B cell (primary cell): ENCODE measurements at regions of chr6 and their contacts with region 1.

Region 1: GRCh38 chr6:13814176-13814937 is at the start of gene MCUR1:
- DNase-seq: peak; percentile 94
- ATAC-seq: peak; percentile 82
- H3K4me3 ChIP-seq: peak within 1 kb of the TSS; percentile 63 to 88 (median 77)
- H3K4me3 Mint-ChIP-seq: peak within 1 kb of the TSS; percentile 94
- H3K27ac ChIP-seq: peak within 1 kb of the TSS; percentile 68 to 89
- H3K27ac Mint-ChIP-seq: peak within 1 kb of the TSS; percentile 89
- H3K4me1 ChIP-seq: peaks cover 17 to 20% of the 10 kb centered on the region in 2 donors
- H3K4me1 Mint-ChIP-seq: peaks cover 31% of the 10 kb centered on the region
- H3K27me3 ChIP-seq: no peaks in the 10 kb centered on the region
- H3K27me3 Mint-ChIP-seq: no peaks in the 10 kb centered on the region
- CTCF ChIP-seq: peak; percentile 14
- total RNA-seq, gene MCUR1: 10.6 and 11.2 TPM in 2 replicates

Region 2: GRCh38 chr6:13614926-13615798 is 199.2 kb before region 1 on chr6 and contains the start of gene NOL7:
- CTCF ChIA-PET with region 1: no interaction called
- POLR2A ChIA-PET with region 1: interaction called, 3 read pairs
- intact Hi-C with region 1: loop called (anchors 1 kb)
- DNase-seq: peak; percentile 99
- ATAC-seq: peak; percentile 93
- H3K4me3 ChIP-seq: peak within 1 kb of the TSS; percentile 79 to 94 (median 93)
- H3K4me3 Mint-ChIP-seq: peak within 1 kb of the TSS; percentile 97
- H3K27ac ChIP-seq: peak within 1 kb of the TSS; percentile 73 to 82
- H3K27ac Mint-ChIP-seq: peak within 1 kb of the TSS; percentile 97
- H3K4me1 ChIP-seq: peaks cover 16 to 22% of the 10 kb centered on the region in 2 donors
- H3K4me1 Mint-ChIP-seq: peaks cover 46% of the 10 kb centered on the region
- H3K27me3 ChIP-seq: no peaks in the 10 kb centered on the region
- H3K27me3 Mint-ChIP-seq: no peaks in the 10 kb centered on the region
- CTCF ChIP-seq: peak; percentile 86
- total RNA-seq, gene NOL7: 48.6 and 58.3 TPM in 2 replicates

Region 3: GRCh38 chr6:13711733-13712598 is 102.4 kb before region 1 on chr6 and contains the start of gene RANBP9:
- CTCF ChIA-PET with region 1: interaction called, 4 read pairs
- POLR2A ChIA-PET with region 1: interaction called, 3 read pairs
- intact Hi-C with region 1: loop called (anchors 1 kb)
- DNase-seq: peak; percentile 94
- ATAC-seq: peak; percentile 82
- H3K4me3 ChIP-seq: peak within 1 kb of the TSS; percentile 58 to 88 (median 78)
- H3K4me3 Mint-ChIP-seq: peak within 1 kb of the TSS; percentile 96
- H3K27ac ChIP-seq: peak within 1 kb of the TSS; percentile 80 to 84
- H3K27ac Mint-ChIP-seq: peak within 1 kb of the TSS; percentile 96
- H3K4me1 ChIP-seq: peaks cover 29 to 33% of the 10 kb centered on the region in 2 donors
- H3K4me1 Mint-ChIP-seq: peaks cover 41% of the 10 kb centered on the region
- H3K27me3 ChIP-seq: no peaks in the 10 kb centered on the region
- H3K27me3 Mint-ChIP-seq: no peaks in the 10 kb centered on the region
- CTCF ChIP-seq: no peak
- total RNA-seq, gene RANBP9: 34.1 and 39.0 TPM in 2 replicates

Region 4: DNA sequence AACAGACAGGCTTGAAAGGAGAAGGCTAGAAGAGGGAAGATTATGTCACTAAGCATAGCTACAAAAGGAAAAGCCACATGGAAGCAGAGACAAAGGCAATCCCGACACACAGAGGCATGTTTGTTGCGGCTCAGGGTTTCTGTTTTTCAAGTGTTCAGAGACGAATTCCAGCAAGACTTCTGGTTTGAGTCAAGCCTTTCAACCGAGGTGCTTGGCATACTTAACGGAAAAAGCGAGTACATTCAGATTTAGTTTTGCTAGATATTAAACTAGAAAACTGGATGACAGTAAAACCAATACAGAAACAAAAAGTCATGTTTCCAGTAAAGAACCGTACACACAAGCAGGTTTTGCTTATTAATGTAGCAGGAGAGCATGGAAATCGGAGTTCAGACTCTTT is 27.2 kb before region 1 on chr6:
- CTCF ChIA-PET with region 1: interaction called, 4 read pairs
- POLR2A ChIA-PET with region 1: interaction called, 12 read pairs
- intact Hi-C with region 1: no loop called
- DNase-seq: no peak
- ATAC-seq: no peak
- H3K4me3 ChIP-seq: no peak overlapping the region
- H3K4me3 Mint-ChIP-seq: no peak overlapping the region
- H3K27ac ChIP-seq: no peak overlapping the region
- H3K27ac Mint-ChIP-seq: no peak overlapping the region
- H3K4me1 ChIP-seq: no peaks in the 10 kb centered on the region
- H3K4me1 Mint-ChIP-seq: no peaks in the 10 kb centered on the region
- H3K27me3 ChIP-seq: no peaks in the 10 kb centered on the region
- H3K27me3 Mint-ChIP-seq: no peaks in the 10 kb centered on the region
- CTCF ChIP-seq: no peak

Region 5: DNA sequence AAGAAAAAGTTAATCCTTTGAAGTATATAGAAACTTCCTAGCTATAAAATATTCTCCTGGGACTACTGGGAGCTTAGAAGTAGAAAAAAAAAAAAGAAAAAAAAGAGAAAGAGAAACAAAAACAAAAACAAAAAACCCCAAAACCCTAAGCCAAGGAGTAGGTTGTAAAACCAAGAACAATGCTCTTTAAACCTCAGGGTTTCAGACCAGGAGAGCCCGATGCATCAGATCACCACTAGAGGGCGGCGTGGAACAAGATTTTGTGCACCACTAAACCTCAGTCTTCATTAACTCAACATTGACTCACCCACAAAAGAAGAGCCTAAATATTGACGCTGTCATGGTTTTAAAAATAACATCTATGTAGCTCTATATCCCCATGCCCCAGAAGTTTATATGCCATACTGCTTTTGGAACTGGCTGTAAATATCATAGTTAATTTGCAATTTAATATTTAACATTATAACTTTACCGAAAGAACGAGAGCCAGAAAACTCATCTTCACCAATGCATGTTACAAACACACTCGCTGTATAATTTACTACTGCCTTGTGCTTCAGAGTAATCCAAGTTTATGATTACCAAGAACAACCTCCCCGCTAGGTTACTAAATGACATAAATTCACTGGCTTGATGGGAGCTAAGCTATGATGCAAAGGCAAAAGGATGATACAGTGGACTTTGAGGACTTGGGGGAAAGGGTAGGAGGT is 19.2 kb before region 1 on chr6:
- CTCF ChIA-PET with region 1: interaction called, 28 read pairs
- POLR2A ChIA-PET with region 1: no interaction called
- intact Hi-C with region 1: loop called (anchors 1 kb)
- DNase-seq: peak; percentile 81
- ATAC-seq: peak; percentile 91
- H3K4me3 ChIP-seq: no peak overlapping the region
- H3K4me3 Mint-ChIP-seq: no peak overlapping the region
- H3K27ac ChIP-seq: no peak overlapping the region
- H3K27ac Mint-ChIP-seq: no peak overlapping the region
- H3K4me1 ChIP-seq: no peaks in the 10 kb centered on the region
- H3K4me1 Mint-ChIP-seq: peaks cover 2% of the 10 kb centered on the region
- H3K27me3 ChIP-seq: no peaks in the 10 kb centered on the region
- H3K27me3 Mint-ChIP-seq: no peaks in the 10 kb centered on the region
- CTCF ChIP-seq: peak; percentile 93

Region 6: GRCh38 chr6:13873285-13874190 is 59.2 kb after region 1 on chr6:
- CTCF ChIA-PET with region 1: no interaction called
- POLR2A ChIA-PET with region 1: no interaction called
- intact Hi-C with region 1: loop called (anchors 1 kb)
- DNase-seq: peak; percentile 83
- ATAC-seq: peak; percentile 94
- H3K4me3 ChIP-seq: peak overlapping the region; percentile 23 to 66 (median 55)
- H3K4me3 Mint-ChIP-seq: peak overlapping the region; percentile 89
- H3K27ac ChIP-seq: no peak overlapping the region
- H3K27ac Mint-ChIP-seq: peak overlapping the region; percentile 15
- H3K4me1 ChIP-seq: peaks cover 15 to 20% of the 10 kb centered on the region in 2 donors
- H3K4me1 Mint-ChIP-seq: peaks cover 19% of the 10 kb centered on the region
- H3K27me3 ChIP-seq: peaks cover 0 to 4% (median 0%) of the 10 kb centered on the region in 4 experiments
- H3K27me3 Mint-ChIP-seq: no peaks in the 10 kb centered on the region
- CTCF ChIP-seq: peak; percentile 87

Region 7: GRCh38 chr6:14001329-14002012 is 187.1 kb after region 1 on chr6:
- CTCF ChIA-PET with region 1: no interaction called
- POLR2A ChIA-PET with region 1: no interaction called
- intact Hi-C with region 1: no loop called
- DNase-seq: no peak
- ATAC-seq: no peak
- H3K4me3 ChIP-seq: no peak overlapping the region
- H3K4me3 Mint-ChIP-seq: no peak overlapping the region
- H3K27ac ChIP-seq: no peak overlapping the region
- H3K27ac Mint-ChIP-seq: no peak overlapping the region
- H3K4me1 ChIP-seq: no peaks in the 10 kb centered on the region
- H3K4me1 Mint-ChIP-seq: no peaks in the 10 kb centered on the region
- H3K27me3 ChIP-seq: no peaks in the 10 kb centered on the region
- H3K27me3 Mint-ChIP-seq: peaks cover 12% of the 10 kb centered on the region
- CTCF ChIP-seq: no peak

Region 8: GRCh38 chr6:15662326-15663129 is 1848.2 kb after region 1 on chr6 and contains the start of gene DTNBP1:
- CTCF ChIA-PET with region 1: no interaction called
- POLR2A ChIA-PET with region 1: no interaction called
- intact Hi-C with region 1: loop called (anchors 5 kb)
- DNase-seq: peak; percentile 95
- ATAC-seq: peak; percentile 73
- H3K4me3 ChIP-seq: peak within 1 kb of the TSS; percentile 50 to 97 (median 78)
- H3K4me3 Mint-ChIP-seq: peak within 1 kb of the TSS; percentile 94
- H3K27ac ChIP-seq: peak within 1 kb of the TSS; percentile 91 to 97
- H3K27ac Mint-ChIP-seq: peak within 1 kb of the TSS; percentile 95
- H3K4me1 ChIP-seq: peaks cover 36 to 49% of the 10 kb centered on the region in 2 donors
- H3K4me1 Mint-ChIP-seq: peaks cover 51% of the 10 kb centered on the region
- H3K27me3 ChIP-seq: no peaks in the 10 kb centered on the region
- H3K27me3 Mint-ChIP-seq: no peaks in the 10 kb centered on the region
- CTCF ChIP-seq: no peak
- total RNA-seq, gene DTNBP1: 73.0 and 73.6 TPM in 2 replicates